ENCODE measurements at regions of chr10 and their contacts with region 1.

Region 1: DNA sequence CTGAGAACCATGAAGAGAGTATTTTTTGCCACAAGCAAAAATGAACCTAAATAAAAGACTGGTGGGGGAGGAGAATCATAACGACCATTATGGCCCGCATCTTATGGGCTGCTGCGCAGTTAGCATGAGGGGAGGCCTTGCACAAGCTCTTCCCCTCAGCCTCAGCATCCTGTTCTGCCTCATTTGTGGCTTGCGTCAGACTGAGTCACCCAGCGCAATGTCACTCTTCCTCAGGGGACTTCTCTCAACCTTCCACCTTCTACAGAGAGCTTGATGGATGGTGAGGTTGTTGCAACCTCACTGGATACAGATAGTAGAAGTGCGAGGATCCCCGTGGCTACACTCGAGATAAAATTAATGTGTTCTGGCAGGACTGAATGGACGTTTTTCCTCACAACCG is 16.8 kb upstream of the GPR15LG start:
- DNase-seq: no peak
- H3K4me3 Mint-ChIP-seq: no peak overlapping the region
- H3K27ac Mint-ChIP-seq: no peak overlapping the region
- H3K4me1 Mint-ChIP-seq: peaks cover 9% of the 10 kb centered on the region
- H3K27me3 Mint-ChIP-seq: peaks cover 9% of the 10 kb centered on the region

Region 2: DNA sequence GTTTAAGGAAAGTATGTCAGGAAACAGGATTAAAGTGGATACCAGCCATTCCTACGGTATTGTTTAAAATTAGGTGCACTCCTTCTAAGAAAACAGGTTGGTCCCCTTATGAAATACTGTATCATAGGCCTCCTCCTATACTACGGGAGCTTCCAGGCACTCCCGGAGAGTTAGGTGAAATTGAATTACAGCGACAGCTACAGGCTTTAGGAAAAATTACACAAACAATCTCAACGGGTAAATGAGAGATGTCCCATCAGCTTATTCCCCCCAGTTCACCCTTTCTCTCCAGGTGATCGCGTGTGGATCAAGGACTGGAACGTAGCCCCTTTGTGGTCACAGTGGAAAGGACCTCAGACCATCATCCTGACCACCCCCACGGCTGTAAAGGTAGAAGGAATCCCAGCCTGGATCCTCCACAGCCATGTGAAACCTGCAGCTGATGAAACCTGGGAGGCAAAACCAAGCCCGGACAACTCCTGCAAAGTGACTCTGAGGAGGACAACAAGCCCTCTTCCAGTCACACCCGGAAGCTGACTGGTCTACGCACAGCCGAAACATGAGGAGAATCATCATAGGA is 42.6 kb before region 1 on chr10:
- intact Hi-C with region 1: no loop called
- DNase-seq: no peak
- H3K4me3 Mint-ChIP-seq: no peak overlapping the region
- H3K27ac Mint-ChIP-seq: no peak overlapping the region
- H3K4me1 Mint-ChIP-seq: no peaks in the 10 kb centered on the region
- H3K27me3 Mint-ChIP-seq: peaks cover 3% of the 10 kb centered on the region

Region 3: DNA sequence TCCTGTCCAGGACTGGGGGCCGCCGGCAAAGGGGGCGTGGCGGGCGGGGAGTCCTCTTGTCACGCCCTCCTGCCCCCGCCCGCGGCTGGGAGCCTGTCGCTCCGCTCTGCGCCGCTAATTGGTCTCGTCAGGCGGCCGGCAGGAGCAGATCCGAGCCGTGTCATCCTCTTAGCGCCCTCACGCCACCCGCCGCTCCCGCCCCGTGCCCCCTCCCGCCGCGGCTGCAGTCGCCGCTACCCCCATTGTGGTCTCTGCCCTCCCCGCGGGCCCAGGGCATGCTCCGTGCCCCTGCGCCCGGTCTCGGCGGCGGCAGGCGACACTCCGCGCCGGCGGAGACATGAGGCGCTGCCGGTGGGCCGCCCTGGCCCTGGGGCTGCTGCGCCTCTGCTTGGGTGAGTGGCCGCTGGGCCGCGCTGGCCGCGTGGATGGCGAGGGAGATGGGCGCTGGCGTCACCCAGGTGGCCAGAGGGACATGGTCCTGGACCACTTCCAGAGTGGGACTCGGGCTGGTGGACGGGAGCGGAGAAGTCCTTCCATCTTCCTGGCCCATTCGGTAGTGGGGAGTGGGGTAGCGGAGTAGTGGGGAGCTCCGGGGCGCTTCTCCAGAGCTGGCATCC is 37.8 kb after region 1 on chr10 and contains the start of gene CDHR1:
- intact Hi-C with region 1: loop called (anchors 5 kb)
- DNase-seq: no peak
- H3K4me3 Mint-ChIP-seq: peak within 1 kb of the TSS; percentile 47
- H3K27ac Mint-ChIP-seq: no peak within 1 kb of the TSS
- H3K4me1 Mint-ChIP-seq: peaks cover 10% of the 10 kb centered on the region
- H3K27me3 Mint-ChIP-seq: peaks cover 42% of the 10 kb centered on the region
- total RNA-seq, gene CDHR1: 0.47 and 0.66 TPM in 2 replicates

Measured in activated T-helper 1 cell treated with anti-CD3 and anti-CD28 coated beads, Interleukin-12 subunit alpha, Interleukin-12 subunit beta, Interleukin-2, Interleukin-4 antibody, amounts not matched to agents 30 ng/mL and 10 ng/mL and 1 ng/mL, durations not matched to agents 14 hours and 24 hours and 36 hours (primary cell).